CD8-positive, alpha-beta T cell (primary cell): ENCODE measurements at regions of chr19 and their contacts with region 1.

Region 1: DNA sequence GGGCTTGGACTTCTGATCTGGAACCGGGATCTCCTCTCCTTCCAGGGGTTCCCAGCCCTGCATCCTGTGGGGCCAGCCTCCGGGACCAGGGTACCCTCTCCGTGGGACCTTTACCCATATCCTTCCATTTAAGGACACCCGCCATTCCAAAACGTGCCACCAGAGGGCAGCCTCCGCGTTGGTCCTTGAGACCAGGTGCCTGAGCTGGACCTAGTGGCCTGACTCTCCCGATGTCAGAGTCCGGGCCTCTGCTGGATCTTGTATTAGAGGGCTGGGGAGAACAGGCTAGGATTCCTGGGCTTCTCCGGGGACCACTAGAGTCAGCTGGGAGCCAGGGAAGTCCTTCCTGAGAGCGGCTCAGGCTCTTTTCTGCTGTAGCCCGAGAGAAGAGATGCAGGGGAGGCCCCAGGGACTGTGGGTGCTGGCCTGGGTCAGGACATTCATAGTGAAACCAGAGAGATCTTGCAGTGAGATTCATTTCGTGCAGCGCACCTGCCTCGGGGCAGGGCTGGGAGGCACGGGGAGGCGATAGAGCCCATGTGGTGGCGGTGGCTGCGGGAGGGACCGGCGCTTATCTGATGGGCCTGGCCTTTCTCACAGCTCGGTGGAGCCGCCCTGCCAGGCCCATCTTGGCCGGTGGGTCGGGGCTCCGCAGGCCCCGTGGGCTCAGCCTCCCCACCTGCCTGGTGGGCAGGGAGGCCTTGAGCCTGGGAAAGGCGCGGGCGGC is 9.8 kb upstream of the SLC7A10 start:
- DNase-seq: peak; percentile 51 to 86 (median 79)
- ATAC-seq: peak; percentile 55
- H3K4me3 ChIP-seq: peak overlapping the region in 1 of 2 experiments; percentile 28
- H3K4me3 Mint-ChIP-seq: no peak overlapping the region
- H3K27ac ChIP-seq: no peak overlapping the region
- H3K27ac Mint-ChIP-seq: no peak overlapping the region
- H3K4me1 ChIP-seq: peaks cover 4% of the 10 kb centered on the region
- H3K4me1 Mint-ChIP-seq: no peaks in the 10 kb centered on the region
- H3K27me3 ChIP-seq: peaks cover 0 to 4% of the 10 kb centered on the region in 2 experiments
- H3K27me3 Mint-ChIP-seq: peaks cover 5% of the 10 kb centered on the region
- CTCF ChIP-seq: peak; percentile 96

Region 2: DNA sequence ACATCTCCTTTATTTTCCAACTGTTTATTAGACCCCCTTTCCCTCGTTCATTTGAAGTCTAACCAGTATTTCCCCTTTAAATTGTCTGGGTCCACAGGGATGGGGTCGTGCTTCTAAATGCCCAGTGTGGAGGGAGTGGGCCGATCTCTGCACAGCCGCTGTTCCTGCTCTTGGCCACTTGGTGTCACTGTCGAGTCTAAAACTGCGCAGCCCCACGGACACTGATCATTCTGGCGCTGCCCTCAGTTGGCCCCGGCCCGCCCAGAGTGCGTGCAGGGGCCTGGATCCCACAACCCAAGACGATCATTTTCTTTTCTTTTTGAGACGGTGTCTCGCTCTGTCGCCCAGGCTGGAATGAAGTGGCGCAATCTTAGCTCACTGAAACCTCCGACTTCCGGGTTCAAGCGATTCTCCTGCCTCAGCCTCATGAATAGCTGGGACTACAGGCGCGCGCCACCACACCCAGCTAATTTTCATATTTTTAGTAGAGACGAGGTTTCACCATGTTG is 91.5 kb before region 1 on chr19:
- CTCF ChIA-PET with region 1: interaction called, 3 read pairs
- POLR2A ChIA-PET with region 1: no interaction called
- intact Hi-C with region 1: loop called (anchors 1 to 2 kb)
- DNase-seq: peak; percentile 17 to 80 (median 60)
- ATAC-seq: peak; percentile 99
- H3K4me3 ChIP-seq: no peak overlapping the region
- H3K4me3 Mint-ChIP-seq: no peak overlapping the region
- H3K27ac ChIP-seq: no peak overlapping the region
- H3K27ac Mint-ChIP-seq: no peak overlapping the region
- H3K4me1 ChIP-seq: peaks cover 3% of the 10 kb centered on the region
- H3K4me1 Mint-ChIP-seq: peaks cover 4% of the 10 kb centered on the region
- H3K27me3 ChIP-seq: peaks cover 0 to 3% of the 10 kb centered on the region in 2 experiments
- H3K27me3 Mint-ChIP-seq: peaks cover 2% of the 10 kb centered on the region
- CTCF ChIP-seq: peak; percentile 91

Region 3: DNA sequence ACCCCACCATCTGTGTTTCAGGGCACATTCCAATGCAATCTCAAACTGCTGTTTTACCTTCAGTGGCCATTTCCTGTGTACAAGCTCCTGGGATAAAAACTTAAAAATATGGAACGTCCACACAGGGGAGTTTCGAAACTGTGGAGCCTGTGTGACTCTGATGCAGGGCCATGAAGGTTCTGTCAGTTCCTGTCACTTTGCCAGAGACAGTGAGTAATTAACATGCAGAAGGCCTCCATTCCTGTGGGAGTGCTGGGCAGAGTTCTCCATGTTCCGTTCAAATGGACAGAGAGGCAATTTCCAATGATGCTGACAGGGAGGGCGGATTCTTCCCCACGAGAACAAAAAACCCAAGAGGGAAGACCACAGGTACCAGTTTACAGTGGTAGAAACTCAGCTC is 79.1 kb before region 1 on chr19:
- CTCF ChIA-PET with region 1: no interaction called
- POLR2A ChIA-PET with region 1: no interaction called
- intact Hi-C with region 1: loop called in 1 of 2 experiments (anchors 5 kb)
- DNase-seq: no peak
- ATAC-seq: no peak
- H3K4me3 ChIP-seq: no peak overlapping the region
- H3K4me3 Mint-ChIP-seq: no peak overlapping the region
- H3K27ac ChIP-seq: no peak overlapping the region
- H3K27ac Mint-ChIP-seq: no peak overlapping the region
- H3K4me1 ChIP-seq: peaks cover 32% of the 10 kb centered on the region
- H3K4me1 Mint-ChIP-seq: peaks cover 31% of the 10 kb centered on the region
- H3K27me3 ChIP-seq: no peaks in the 10 kb centered on the region
- H3K27me3 Mint-ChIP-seq: no peaks in the 10 kb centered on the region
- CTCF ChIP-seq: no peak

Region 4: DNA sequence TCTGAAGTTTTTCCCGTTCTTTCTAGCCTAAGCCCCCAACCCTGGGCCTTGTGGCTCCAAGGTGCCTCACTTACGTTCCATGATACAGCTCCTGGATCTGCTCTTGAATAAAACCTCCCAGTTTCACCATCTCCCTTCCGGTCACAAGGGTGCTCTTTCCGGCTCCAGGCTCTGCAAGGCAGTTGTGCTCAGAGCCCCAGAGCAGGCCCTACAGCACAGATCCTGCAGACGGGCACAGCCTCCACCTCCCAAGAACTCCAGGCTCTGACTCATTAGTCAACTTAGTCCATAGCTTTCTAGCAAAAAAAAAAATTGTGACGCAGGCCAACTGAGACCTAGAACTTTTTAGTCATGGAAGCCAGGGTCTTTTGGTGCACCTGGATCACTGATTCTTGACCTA is 24.1 kb after region 1 on chr19:
- CTCF ChIA-PET with region 1: interaction called, 15 read pairs
- POLR2A ChIA-PET with region 1: no interaction called
- intact Hi-C with region 1: no loop called
- DNase-seq: no peak
- ATAC-seq: no peak
- H3K4me3 ChIP-seq: no peak overlapping the region
- H3K4me3 Mint-ChIP-seq: no peak overlapping the region
- H3K27ac ChIP-seq: no peak overlapping the region
- H3K27ac Mint-ChIP-seq: no peak overlapping the region
- H3K4me1 ChIP-seq: peaks cover 13% of the 10 kb centered on the region
- H3K4me1 Mint-ChIP-seq: peaks cover 16% of the 10 kb centered on the region
- H3K27me3 ChIP-seq: no peaks in the 10 kb centered on the region
- H3K27me3 Mint-ChIP-seq: peaks cover 15% of the 10 kb centered on the region
- CTCF ChIP-seq: no peak

Region 5: DNA sequence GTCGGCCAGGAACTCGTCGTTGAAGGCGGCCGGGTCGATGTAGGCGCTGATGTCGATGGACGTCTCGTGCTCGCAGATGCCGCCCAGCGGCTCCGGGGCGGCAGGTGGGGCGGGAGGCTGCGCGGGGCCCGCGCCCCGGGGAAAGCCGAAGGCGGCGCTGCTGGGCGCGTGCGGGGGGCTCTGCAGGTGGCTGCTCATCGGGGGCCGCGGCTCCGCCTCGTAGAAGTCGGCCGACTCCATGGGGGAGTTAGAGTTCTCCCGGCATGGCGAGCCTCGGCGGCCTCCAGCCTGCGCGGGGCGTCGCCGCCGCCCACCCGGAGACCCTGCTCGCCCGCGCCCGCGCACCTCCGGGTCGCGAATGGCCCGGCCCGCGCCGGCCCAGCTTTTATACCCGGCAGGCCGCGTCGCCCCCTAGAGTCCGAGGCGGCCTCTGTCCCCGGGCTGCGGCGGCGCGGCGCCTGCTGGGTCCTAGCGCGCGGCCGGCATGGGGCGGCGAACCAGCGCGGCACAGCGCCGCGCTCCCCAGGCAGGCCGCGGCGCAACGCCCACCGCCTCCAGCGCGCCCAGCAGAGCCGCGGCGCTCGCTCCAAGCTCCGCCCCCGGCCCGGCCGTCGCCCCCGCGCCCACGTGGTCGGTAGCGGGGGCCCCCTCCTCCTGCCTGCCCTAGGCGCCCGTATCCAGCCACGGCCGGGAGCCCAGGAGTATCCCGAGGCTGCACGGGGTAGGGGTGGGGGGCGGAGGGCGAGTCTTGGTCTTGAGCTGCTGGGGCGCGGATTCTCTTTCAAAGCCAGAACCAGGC is 66.9 kb after region 1 on chr19 and contains the start of gene CEBPA:
- CTCF ChIA-PET with region 1: no interaction called
- POLR2A ChIA-PET with region 1: no interaction called
- intact Hi-C with region 1: loop called in 1 of 2 experiments (anchors 2 kb)
- DNase-seq: peak; percentile 23 to 88 (median 42)
- ATAC-seq: peak; percentile 81
- H3K4me3 ChIP-seq: peak within 1 kb of the TSS; percentile 46 to 52
- H3K4me3 Mint-ChIP-seq: peak within 1 kb of the TSS; percentile 67
- H3K27ac ChIP-seq: no peak within 1 kb of the TSS
- H3K27ac Mint-ChIP-seq: no peak within 1 kb of the TSS
- H3K4me1 ChIP-seq: peaks cover 8% of the 10 kb centered on the region
- H3K4me1 Mint-ChIP-seq: peaks cover 6% of the 10 kb centered on the region
- H3K27me3 ChIP-seq: peaks cover 3 to 14% of the 10 kb centered on the region in 2 experiments
- H3K27me3 Mint-ChIP-seq: peaks cover 36% of the 10 kb centered on the region
- CTCF ChIP-seq: no peak
- total RNA-seq, gene CEBPA: 1.7 to 1.9 TPM

Region 6: DNA sequence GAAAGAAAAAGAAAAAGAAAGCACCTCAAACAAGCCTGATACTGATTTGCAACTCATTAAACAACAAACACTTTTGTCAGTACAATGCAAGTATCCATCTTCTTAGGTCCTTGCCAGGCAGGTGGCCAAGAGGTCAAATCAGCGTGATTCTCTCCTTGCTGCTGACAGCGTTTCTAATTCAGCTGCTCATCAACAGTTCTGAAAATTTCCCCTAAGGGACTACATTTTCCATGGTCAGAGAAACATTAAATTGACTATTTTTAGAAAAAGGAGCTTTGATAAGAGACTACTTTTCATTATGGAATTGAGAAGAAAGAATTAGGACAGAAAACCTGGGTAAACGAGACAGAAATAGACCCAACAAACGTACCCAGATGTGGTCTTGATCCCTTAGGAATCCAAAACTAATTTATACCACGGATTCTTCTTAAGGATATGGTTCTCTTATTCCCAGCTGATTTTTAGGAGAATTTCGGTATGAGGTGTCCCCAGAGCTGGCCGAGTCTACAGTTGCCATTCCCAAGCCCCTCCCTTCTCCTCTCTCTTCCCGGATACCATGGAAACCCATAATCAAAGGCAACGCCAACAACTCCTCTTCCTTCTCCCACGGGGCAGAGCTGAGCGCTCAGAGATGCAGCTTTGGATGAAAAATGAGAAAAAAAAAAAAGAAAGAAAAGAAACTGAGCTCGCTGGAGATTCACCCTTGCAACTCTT is 108.6 kb after region 1 on chr19:
- CTCF ChIA-PET with region 1: no interaction called
- POLR2A ChIA-PET with region 1: no interaction called
- intact Hi-C with region 1: no loop called
- DNase-seq: no peak
- ATAC-seq: no peak
- H3K4me3 ChIP-seq: no peak overlapping the region
- H3K4me3 Mint-ChIP-seq: no peak overlapping the region
- H3K27ac ChIP-seq: no peak overlapping the region
- H3K27ac Mint-ChIP-seq: no peak overlapping the region
- H3K4me1 ChIP-seq: no peaks in the 10 kb centered on the region
- H3K4me1 Mint-ChIP-seq: no peaks in the 10 kb centered on the region
- H3K27me3 ChIP-seq: peaks cover 0 to 17% of the 10 kb centered on the region in 2 experiments
- H3K27me3 Mint-ChIP-seq: peaks cover 41% of the 10 kb centered on the region
- CTCF ChIP-seq: no peak

Region 7: GRCh38 chr19:33406521-33407139 is 171.2 kb after region 1 on chr19:
- CTCF ChIA-PET with region 1: interaction called, 100 read pairs
- POLR2A ChIA-PET with region 1: no interaction called
- intact Hi-C with region 1: loop called (anchors 1 kb)
- DNase-seq: peak; percentile 54 to 86 (median 74)
- ATAC-seq: peak; percentile 80
- H3K4me3 ChIP-seq: no peak overlapping the region
- H3K4me3 Mint-ChIP-seq: no peak overlapping the region
- H3K27ac ChIP-seq: no peak overlapping the region
- H3K27ac Mint-ChIP-seq: no peak overlapping the region
- H3K4me1 ChIP-seq: no peaks in the 10 kb centered on the region
- H3K4me1 Mint-ChIP-seq: no peaks in the 10 kb centered on the region
- H3K27me3 ChIP-seq: no peaks in the 10 kb centered on the region
- H3K27me3 Mint-ChIP-seq: no peaks in the 10 kb centered on the region
- CTCF ChIP-seq: peak; percentile 86

Region 8: DNA sequence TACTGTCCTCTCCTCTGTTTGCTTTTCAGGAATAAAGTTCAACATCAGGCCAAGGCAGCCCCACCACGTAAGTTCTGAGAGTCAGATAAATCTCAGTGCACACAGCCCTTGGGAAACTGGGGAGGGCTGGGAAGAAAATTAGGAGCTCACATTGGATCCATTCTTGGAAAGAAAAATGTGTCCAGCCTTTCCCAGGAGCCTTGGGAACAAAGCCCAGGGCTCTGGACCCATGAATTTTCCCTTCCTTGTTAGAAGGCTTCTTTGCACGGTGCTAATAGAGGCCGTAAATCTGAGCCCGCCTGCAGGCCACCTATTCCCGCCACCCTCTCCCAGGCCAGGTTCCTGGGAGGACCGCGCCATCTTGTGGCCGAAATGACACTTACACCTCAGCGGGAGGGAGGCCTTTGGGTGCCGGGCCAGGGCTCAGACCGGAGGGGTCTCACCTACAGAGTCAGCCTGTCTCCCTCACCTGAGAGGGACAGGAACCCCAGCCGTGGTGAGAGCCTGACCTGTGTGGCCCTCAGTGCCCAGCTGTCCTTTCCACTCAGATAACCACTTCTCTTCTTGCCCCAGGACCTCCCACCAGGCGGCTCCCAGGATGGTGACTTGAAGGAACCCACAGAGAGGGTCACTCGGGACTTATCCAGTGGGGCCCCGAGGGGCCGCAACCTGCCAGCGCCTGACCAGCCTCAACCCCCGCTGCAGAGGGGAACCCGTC is 536.1 kb after region 1 on chr19:
- CTCF ChIA-PET with region 1: interaction called, 3 read pairs
- POLR2A ChIA-PET with region 1: no interaction called
- intact Hi-C with region 1: loop called (anchors 2 to 5 kb)
- DNase-seq: peak; percentile 35 to 71 (median 62)
- ATAC-seq: peak; percentile 46
- H3K4me3 ChIP-seq: no peak overlapping the region
- H3K4me3 Mint-ChIP-seq: no peak overlapping the region
- H3K27ac ChIP-seq: no peak overlapping the region
- H3K27ac Mint-ChIP-seq: no peak overlapping the region
- H3K4me1 ChIP-seq: no peaks in the 10 kb centered on the region
- H3K4me1 Mint-ChIP-seq: no peaks in the 10 kb centered on the region
- H3K27me3 ChIP-seq: peaks cover 0 to 4% of the 10 kb centered on the region in 2 experiments
- H3K27me3 Mint-ChIP-seq: peaks cover 18% of the 10 kb centered on the region
- CTCF ChIP-seq: peak; percentile 47